Ovary (tissue), 10 donors: ENCODE measurements at regions of chr4 and their contacts with region 1.

Region 1: GRCh38 chr4:8506373-8507188 is 66.0 kb downstream of the TRMT44 start:
- DNase-seq: peak; percentile 77 to 89 (median 81)
- H3K4me3 ChIP-seq: no peak overlapping the region
- H3K27ac ChIP-seq: peak overlapping the region; percentile 65 to 95
- H3K4me1 ChIP-seq: peaks cover 61% of the 10 kb centered on the region
- H3K27me3 ChIP-seq: no peaks in the 10 kb centered on the region
- CTCF ChIP-seq: peak in 1 of 3 donors; percentile 44
- EP300 ChIP-seq: no peak
- POLR2A ChIP-seq: no peak

Region 2: GRCh38 chr4:8468746-8469535 is 37.6 kb before region 1 on chr4:
- intact Hi-C with region 1: loop called in 2 of 4 experiments (anchors 1 to 5 kb)
- DNase-seq: peak; percentile 82 to 90 (median 89)
- H3K4me3 ChIP-seq: no peak overlapping the region
- H3K27ac ChIP-seq: peak overlapping the region in 1 of 2 donors; percentile 93
- H3K4me1 ChIP-seq: peaks cover 30% of the 10 kb centered on the region
- H3K27me3 ChIP-seq: no peaks in the 10 kb centered on the region
- CTCF ChIP-seq: peak; percentile 92 to 93 (median 92)
- EP300 ChIP-seq: no peak
- POLR2A ChIP-seq: no peak

Region 3: DNA sequence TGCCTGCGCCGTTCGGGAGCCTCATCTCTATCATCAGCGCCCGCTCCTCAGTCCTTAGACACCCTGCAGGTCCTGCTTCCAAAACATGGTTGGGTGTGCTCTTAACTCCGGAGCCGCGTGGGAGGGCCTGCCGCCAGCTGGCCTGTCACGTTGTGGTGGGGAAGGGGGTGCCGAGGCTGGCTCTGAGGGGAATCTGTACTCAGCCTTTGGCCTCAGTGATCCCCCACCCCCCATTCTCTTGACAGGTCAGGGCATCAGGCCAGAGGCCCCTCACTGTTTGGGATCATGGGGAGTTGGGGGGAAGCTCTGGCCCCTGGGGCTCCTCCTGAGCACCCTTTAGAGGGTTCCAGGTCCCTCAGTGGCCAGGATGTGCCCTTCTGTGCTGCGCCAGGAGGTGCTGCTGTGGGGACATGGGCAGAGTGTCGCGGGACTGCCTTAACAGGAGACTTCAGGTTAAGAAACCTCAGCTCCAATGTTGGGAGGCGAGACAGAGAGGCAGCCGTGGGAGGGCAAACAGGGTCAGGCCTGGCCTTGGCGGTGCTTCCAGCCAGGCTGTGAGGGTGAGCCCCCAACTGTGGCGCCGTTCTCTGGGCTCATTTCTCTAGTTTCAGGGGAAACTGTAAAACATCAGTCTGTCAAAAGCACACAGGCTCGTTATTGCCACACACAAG is 32.5 kb before region 1 on chr4:
- intact Hi-C with region 1: loop called in 2 of 4 experiments (anchors 1 to 5 kb)
- DNase-seq: peak; percentile 66 to 82 (median 76)
- H3K4me3 ChIP-seq: peak overlapping the region; percentile 2
- H3K27ac ChIP-seq: peak overlapping the region; percentile 64 to 93
- H3K4me1 ChIP-seq: peaks cover 44% of the 10 kb centered on the region
- H3K27me3 ChIP-seq: no peaks in the 10 kb centered on the region
- CTCF ChIP-seq: no peak
- EP300 ChIP-seq: no peak
- POLR2A ChIP-seq: no peak